G401 (cell line): ENCODE measurements at regions of chr19 and their contacts with region 1.

Region 1: DNA sequence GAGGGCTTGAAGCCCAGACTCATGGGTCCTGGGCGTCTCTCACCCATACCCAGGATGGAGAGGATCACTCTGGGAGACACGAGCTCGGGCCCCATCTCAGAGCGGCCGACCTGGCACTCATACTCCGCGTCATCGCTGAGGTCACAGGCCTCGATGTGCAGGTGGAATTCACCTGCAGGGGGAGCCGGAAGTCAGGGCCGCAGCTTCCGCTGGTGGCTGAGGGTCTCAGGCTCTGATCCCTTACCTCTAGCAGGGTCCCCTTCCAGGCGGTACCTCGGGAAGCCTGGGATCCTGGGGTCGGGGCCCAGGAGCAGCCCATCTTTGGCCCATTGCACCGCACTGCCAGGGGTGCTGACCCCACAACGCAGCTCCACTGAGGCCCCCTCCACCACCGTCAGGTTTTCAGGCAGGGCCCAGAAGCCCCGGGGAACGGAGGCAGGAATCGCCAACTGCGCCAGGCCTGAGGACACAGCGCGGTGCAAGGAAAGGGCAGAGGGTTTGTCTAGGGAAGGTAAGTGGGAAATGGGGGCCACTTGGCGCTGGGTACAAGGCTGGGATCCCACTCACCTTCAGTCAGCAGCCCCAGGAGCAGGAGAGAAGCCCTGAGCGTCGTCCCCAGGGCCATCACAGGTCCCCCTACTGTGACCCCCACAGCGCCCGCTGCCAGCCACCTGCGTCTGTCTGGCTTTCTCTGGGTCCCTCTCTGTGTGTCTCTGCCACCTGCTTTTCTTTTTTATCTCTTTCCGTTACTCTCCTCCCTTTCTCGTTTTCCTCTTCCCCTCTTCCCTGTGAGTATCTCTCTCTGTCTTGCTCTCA is 883 bp downstream of the NPHS1 start:
- DNase-seq: no peak

Region 2: GRCh38 chr19:35899547-35900214 is 48.3 kb after region 1 on chr19:
- in situ Hi-C with region 1: loop called (anchors 5 kb)
- DNase-seq: peak; percentile 93

Region 3: GRCh38 chr19:35959040-35959967 is 107.9 kb after region 1 on chr19:
- in situ Hi-C with region 1: no loop called
- DNase-seq: no peak

Region 4: DNA sequence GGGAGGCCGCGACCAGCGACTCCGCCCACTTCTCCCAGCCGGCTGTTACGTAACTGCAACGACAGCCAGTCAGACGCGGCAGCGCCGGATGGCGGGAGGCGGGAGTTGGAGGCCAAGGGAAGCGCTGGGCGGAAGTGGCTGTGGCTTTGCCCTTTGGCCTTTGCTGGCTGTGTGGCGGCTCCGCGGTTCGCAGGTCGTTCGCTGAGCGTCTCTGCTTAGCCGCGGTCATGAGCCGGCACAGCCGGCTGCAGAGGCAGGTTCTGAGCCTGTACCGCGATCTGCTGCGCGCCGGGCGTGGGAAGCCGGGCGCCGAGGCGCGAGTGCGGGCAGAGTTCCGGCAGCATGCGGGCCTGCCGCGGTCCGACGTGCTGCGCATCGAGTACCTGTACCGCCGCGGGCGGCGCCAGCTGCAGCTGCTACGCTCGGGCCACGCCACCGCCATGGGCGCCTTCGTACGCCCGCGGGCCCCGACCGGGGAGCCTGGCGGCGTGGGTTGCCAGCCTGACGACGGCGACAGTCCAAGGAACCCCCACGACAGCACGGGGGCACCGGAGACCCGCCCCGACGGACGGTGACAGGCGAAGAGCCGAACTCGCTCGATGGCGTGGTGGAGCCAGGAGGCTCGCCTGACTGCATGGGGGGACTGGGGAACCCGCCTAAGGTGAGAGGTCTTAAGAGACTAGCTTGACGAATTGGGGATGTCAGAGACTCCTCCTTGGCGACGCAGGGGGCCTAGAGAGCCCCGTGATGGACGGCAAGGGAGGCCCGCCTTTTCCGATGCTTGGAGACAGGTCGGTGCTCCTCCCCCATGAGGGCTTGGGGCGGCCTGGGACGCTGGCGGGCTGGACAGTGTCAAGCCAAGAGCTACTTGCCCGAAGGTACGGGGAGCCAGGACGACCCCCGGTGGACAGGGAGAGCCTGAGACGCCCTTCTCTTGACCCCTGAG is 143.9 kb after region 1 on chr19 and contains the start of gene SDHAF1:
- in situ Hi-C with region 1: no loop called
- DNase-seq: peak; percentile 97
- total RNA-seq, gene SDHAF1: 41.7 and 46.9 TPM in 2 replicates